ENCODE measurements at regions of chr16 and their contacts with region 1.

Region 1: DNA sequence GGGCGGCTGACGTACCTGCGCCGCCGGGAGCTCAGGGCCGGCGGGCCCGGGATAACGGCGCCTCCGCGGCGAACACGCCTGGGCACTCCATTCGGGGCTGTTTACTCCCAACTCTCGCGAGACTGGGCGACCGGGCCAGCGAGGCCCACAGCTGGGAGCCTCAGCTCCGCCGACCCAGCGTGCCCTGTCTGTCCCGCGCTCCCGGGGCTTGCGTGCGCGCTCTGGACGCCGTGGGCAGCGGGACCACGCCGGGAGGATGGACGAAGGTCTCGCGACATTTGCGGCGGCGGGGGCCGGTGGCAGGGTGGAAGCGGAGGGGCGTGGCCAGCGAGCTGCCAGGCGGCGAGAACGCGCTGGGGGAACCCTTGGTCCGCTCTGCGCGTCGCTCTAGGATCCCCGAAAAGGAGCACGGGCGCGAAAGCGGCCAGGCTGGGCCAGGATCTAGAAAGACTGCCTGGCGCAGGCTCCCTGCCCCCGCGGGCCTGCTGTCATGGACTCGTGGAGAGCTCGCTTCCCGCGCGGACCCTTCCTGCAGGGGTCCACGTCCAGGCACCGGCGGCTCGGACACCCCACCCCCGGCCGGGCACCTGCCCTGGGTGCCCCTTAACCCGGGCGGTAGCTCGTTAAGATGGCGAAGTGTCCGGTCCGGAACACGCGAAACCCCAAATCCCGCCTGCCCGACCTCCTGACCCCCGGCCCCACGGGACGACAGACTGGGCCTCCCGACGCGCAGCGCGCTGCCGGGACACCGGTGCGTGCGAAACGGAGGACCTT is at the start of gene MBTPS1:
- DNase-seq: peak; percentile 98
- ATAC-seq: peak; percentile 95
- H3K4me3 Mint-ChIP-seq: peak within 1 kb of the TSS; percentile 94
- H3K27ac Mint-ChIP-seq: peak within 1 kb of the TSS; percentile 97
- H3K4me1 Mint-ChIP-seq: peaks cover 11% of the 10 kb centered on the region
- H3K27me3 Mint-ChIP-seq: no peaks in the 10 kb centered on the region
- CTCF ChIP-seq: no peak
- total RNA-seq, gene MBTPS1: 45.1 to 47.4 TPM (median 46.9 TPM) in 3 replicates

Region 2: GRCh38 chr16:83933885-83934683 is 182.8 kb before region 1 on chr16:
- CTCF ChIA-PET with region 1: no interaction called
- POLR2A ChIA-PET with region 1: no interaction called
- DNase-seq: no peak
- ATAC-seq: no peak
- H3K4me3 Mint-ChIP-seq: no peak overlapping the region
- H3K27ac Mint-ChIP-seq: peak overlapping the region; percentile 23; the same call in 1 of the 2 replicates
- H3K4me1 Mint-ChIP-seq: no peaks in the 10 kb centered on the region
- H3K27me3 Mint-ChIP-seq: no peaks in the 10 kb centered on the region; the same call in 1 of the 2 replicates
- CTCF ChIP-seq: no peak

Region 3: GRCh38 chr16:84007965-84008364 is 108.9 kb before region 1 on chr16:
- CTCF ChIA-PET with region 1: no interaction called
- POLR2A ChIA-PET with region 1: no interaction called
- DNase-seq: no peak
- ATAC-seq: no peak
- H3K4me3 Mint-ChIP-seq: no peak overlapping the region
- H3K27ac Mint-ChIP-seq: no peak overlapping the region
- H3K4me1 Mint-ChIP-seq: no peaks in the 10 kb centered on the region
- H3K27me3 Mint-ChIP-seq: no peaks in the 10 kb centered on the region; the same call in 1 of the 2 replicates
- CTCF ChIP-seq: no peak

Region 4: DNA sequence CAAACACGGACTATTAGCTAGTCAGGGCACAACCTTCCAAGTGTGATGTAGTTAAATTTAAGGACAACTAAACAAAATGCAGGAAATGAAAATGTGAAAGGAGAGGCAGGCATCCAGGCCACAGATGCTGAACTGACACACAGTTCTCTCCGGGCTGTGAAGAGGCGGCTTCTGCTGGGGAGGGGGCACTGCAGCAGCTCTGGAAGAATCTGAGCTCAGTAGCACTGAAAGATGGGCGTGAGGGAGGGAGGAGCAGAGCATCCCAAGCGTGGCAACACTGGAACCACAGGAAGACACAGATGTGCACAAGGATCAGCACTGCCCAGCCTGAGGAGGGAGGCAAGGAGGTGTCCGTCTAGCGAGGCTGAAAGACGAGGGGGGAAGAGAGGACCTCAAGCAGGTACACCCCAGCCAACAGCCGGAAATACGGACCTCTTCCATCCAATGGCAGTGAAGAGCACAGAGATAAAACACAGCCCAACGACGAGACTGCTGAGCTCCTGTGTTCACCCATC is 11.5 kb before region 1 on chr16:
- CTCF ChIA-PET with region 1: interaction called, 20 read pairs
- POLR2A ChIA-PET with region 1: no interaction called
- DNase-seq: no peak
- ATAC-seq: no peak
- H3K4me3 Mint-ChIP-seq: no peak overlapping the region
- H3K27ac Mint-ChIP-seq: peak overlapping the region; percentile 34
- H3K4me1 Mint-ChIP-seq: peaks cover 22% of the 10 kb centered on the region
- H3K27me3 Mint-ChIP-seq: no peaks in the 10 kb centered on the region
- CTCF ChIP-seq: no peak

Region 5: GRCh38 chr16:84138824-84139627 is 22.1 kb after region 1 on chr16:
- CTCF ChIA-PET with region 1: interaction called, 19 read pairs
- POLR2A ChIA-PET with region 1: interaction called, 3 read pairs
- DNase-seq: no peak
- ATAC-seq: peak; percentile 46
- H3K4me3 Mint-ChIP-seq: peak overlapping the region; percentile 32; the same call in 1 of the 2 replicates
- H3K27ac Mint-ChIP-seq: peak overlapping the region; percentile 75
- H3K4me1 Mint-ChIP-seq: peaks cover 54% of the 10 kb centered on the region
- H3K27me3 Mint-ChIP-seq: no peaks in the 10 kb centered on the region
- CTCF ChIP-seq: no peak

Region 6: DNA sequence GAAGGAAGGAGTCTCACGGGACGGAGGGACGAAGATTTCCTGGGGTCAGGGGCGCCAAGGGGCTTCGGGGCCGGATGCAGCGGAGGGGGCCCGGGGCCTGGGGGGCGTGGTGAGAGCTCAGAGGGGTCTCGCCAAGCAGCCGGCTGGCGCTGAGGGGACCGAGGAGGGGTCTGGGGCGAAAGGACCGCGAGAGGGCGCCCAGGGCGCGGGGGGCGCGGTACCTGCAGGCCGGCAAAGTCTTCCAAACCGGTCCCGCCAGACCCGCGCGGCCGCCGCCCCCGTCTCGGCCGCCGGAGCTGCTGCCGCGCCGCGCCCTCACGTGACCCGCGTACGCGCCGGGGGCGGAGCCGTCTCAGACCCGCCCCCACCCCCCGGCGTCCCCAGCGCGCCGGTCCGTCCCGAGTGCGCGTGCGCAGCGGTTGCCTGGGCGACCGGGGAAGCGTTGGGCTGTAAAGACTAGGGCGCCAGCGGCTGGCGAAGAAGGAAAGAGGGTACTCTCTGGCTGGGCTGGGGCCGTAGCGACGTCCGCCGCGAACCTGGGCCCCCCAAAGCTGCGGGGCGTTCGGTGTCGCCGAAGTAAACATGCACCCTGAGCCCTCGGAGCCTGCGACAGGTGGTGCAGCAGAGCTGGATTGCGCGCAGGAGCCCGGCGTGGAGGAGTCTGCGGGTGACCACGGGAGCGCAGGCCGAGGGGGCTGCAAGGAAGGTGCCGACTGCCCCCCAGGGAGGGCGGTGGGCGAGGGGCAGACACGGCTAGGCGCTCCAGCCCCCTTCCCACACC is 28.1 kb after region 1 on chr16 and contains the starts of genes DNAAF1 and HSDL1:
- CTCF ChIA-PET with region 1: interaction called, 19 read pairs
- POLR2A ChIA-PET with region 1: interaction called, 7 read pairs
- DNase-seq: peak; percentile 93
- ATAC-seq: peak; percentile 71
- H3K4me3 Mint-ChIP-seq: peak within 1 kb of the TSS; percentile 98
- H3K27ac Mint-ChIP-seq: peak within 1 kb of the TSS; percentile 92
- H3K4me1 Mint-ChIP-seq: peaks cover 12% of the 10 kb centered on the region
- H3K27me3 Mint-ChIP-seq: peaks cover 13% of the 10 kb centered on the region
- CTCF ChIP-seq: no peak
- total RNA-seq, gene DNAAF1: 0.09 to 0.62 TPM (median 0.20 TPM) in 3 replicates
- total RNA-seq, gene HSDL1: 48.6 to 58.1 TPM (median 53.4 TPM) in 3 replicates

Region 7: DNA sequence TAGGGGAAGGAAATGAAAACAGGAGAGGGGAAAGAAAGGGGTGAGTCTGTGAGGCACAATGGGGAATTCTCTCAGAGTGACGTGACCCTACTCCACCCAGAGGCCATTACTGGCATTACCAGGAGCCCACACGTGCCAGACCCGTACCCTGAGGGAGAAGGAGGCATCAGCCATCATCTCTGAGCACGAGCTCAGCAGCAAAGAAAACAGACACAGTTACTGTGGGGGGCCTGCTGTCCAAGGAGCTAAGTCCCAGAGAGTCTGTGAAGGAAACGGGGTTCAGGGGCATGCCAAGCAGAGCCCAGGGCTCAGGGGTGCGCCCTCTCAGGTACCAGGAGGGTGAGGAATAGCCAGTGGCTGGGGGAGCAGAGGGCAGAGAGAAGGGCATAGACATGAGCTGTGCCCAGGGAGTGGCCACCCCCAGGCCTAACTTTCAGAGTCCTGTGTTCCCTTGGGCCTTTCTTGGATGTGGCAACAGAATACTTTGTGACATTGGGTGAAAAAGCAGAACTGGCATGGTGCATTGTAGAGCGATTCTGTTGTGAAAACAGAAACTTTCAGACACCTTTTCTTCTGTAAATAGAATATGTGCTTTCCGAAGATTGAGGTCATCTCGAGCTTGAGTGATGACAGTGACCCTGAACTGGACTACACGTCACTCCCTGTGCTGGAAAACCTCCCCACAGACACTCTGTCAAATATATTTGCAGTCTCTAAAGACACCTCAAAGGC is 58.6 kb after region 1 on chr16:
- CTCF ChIA-PET with region 1: interaction called, 10 read pairs
- POLR2A ChIA-PET with region 1: no interaction called
- DNase-seq: peak; percentile 62
- ATAC-seq: peak; percentile 83
- H3K4me3 Mint-ChIP-seq: no peak overlapping the region
- H3K27ac Mint-ChIP-seq: no peak overlapping the region
- H3K4me1 Mint-ChIP-seq: no peaks in the 10 kb centered on the region
- H3K27me3 Mint-ChIP-seq: no peaks in the 10 kb centered on the region
- CTCF ChIP-seq: peak; percentile 65

Measured in WTC11 (cell line).